H1 (cell line): ENCODE measurements at regions of chr17 and their contacts with region 1.

Region 1: DNA sequence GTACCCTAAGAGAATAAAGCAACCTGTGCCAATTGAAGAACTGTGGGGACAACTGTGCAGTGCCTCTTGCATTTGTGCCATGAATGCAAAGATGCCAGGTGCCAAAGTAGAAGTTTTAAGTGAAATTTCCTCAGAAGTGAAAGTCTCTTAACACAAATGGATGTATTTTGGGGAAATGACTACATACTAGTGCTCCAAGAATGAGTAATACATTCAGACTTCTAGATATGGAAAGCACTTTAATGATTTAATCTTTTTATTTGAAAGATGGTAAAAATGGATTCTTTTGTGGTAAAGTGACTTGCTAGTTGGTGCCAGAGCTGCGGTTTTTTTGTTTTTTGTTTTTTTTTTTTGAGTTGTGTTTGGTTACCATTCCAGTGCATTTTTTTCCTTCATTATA is 15.0 kb downstream of the UTP18 start:
- DNase-seq: no peak
- H3K4me3 ChIP-seq: no peak overlapping the region
- H3K27ac ChIP-seq: no peak overlapping the region
- H3K4me1 ChIP-seq: no peaks in the 10 kb centered on the region
- H3K27me3 ChIP-seq: no peaks in the 10 kb centered on the region
- CTCF ChIP-seq: no peak
- EP300 ChIP-seq: no peak
- POLR2A ChIP-seq: no peak
- RAD21 ChIP-seq: no peak

Region 2: GRCh38 chr17:51203838-51204237 is 71.5 kb before region 1 on chr17:
- CTCF ChIA-PET with region 1: no interaction called
- POLR2A ChIA-PET with region 1: no interaction called
- DNase-seq: no peak
- H3K4me3 ChIP-seq: no peak overlapping the region
- H3K27ac ChIP-seq: no peak overlapping the region
- H3K4me1 ChIP-seq: no peaks in the 10 kb centered on the region
- H3K27me3 ChIP-seq: no peaks in the 10 kb centered on the region
- CTCF ChIP-seq: no peak
- EP300 ChIP-seq: no peak
- POLR2A ChIP-seq: no peak
- RAD21 ChIP-seq: no peak

Region 3: DNA sequence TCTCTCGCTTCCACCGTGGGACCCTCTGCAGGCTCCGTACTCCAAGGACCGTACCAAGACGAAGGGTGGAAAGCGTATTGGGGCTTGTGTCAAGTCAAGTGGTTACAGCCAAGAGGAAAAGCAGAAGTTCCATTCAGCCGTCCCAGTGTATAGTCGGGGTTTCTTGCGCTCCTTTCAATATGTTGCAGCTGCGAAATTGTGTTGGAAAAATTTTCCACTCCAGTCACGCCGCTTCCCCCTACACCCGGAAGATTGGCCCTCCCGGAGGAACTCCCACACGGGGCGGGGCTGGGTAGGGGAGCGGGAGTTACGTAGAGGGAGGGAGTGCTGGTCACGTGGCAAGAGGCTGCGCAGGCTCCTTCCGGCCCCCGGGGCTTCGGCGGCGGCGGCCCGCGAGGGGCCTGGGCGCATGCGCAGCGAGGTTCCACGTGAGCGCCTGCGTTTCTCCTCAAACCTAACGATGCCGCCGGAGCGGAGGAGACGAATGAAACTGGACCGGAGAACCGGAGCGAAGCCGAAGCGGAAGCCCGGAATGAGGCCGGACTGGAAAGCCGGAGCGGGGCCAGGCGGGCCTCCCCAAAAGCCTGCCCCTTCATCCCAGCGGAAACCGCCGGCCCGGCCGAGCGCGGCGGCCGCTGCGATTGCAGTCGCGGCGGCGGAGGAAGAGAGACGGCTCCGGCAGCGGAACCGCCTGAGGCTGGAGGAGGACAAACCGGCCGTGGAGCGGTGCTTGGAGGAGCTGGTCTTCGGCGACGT is 15.1 kb before region 1 on chr17 and contains the start of gene UTP18:
- CTCF ChIA-PET with region 1: no interaction called
- POLR2A ChIA-PET with region 1: interaction called, 43 read pairs
- DNase-seq: peak; percentile 90 to 94
- H3K4me3 ChIP-seq: peak within 1 kb of the TSS; percentile 83 to 96 (median 92)
- H3K27ac ChIP-seq: peak within 1 kb of the TSS; percentile 98
- H3K4me1 ChIP-seq: peaks cover 1 to 6% (median 3%) of the 10 kb centered on the region in 4 experiments; a peak in 3 of 7 replicates
- H3K27me3 ChIP-seq: no peaks in the 10 kb centered on the region
- CTCF ChIP-seq: no peak
- EP300 ChIP-seq: peak in 1 of 2 experiments; percentile 98; a peak in 2 of 3 replicates
- POLR2A ChIP-seq: no peak; a peak in 1 of 3 replicates
- RAD21 ChIP-seq: no peak
- total RNA-seq, gene UTP18: 79.6 and 85.7 TPM in 2 replicates

Region 4: DNA sequence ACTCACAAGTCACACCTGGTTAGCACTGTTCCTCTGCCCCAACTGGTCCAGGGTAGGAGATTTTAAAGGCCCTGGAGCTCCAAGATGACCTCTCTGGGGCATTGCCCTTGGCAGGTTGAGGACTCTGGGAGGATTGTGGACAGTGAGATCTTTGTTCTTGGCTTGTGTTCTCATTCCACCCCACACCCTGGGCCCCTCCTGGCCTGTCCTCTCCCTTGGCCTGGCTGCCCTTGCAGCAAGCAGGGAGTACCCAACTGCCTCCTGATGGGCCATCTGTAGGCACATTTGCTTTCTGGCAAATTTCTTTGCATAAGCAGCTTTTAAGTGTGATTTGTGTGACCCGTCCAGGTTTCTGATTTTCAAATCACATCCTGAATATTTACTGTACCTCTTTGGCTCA is 224.5 kb after region 1 on chr17:
- CTCF ChIA-PET with region 1: no interaction called
- POLR2A ChIA-PET with region 1: no interaction called
- DNase-seq: no peak
- H3K4me3 ChIP-seq: no peak overlapping the region
- H3K27ac ChIP-seq: no peak overlapping the region
- H3K4me1 ChIP-seq: no peaks in the 10 kb centered on the region; a peak in 1 of 7 replicates
- H3K27me3 ChIP-seq: no peaks in the 10 kb centered on the region
- CTCF ChIP-seq: no peak
- EP300 ChIP-seq: no peak
- POLR2A ChIP-seq: no peak
- RAD21 ChIP-seq: no peak